ENCODE measurements at regions of chrX and their contacts with region 1.

Region 1: GRCh38 chrX:70433848-70434351 is 10.7 kb upstream of the DLG3 start:
- DNase-seq: peak; percentile 70 to 83
- ATAC-seq: peak; percentile 79 to 85 (median 80)
- H3K4me3 ChIP-seq: peak overlapping the region; percentile 76
- H3K27ac ChIP-seq: peak overlapping the region; percentile 89
- H3K4me1 ChIP-seq: peaks cover 4% of the 10 kb centered on the region
- H3K27me3 ChIP-seq: peaks cover 0 to 31% (median 0%) of the 10 kb centered on the region in 3 donors
- CTCF ChIP-seq: peak; percentile 66

Region 2: GRCh38 chrX:70133303-70134115 is 300.4 kb before region 1 on chrX and contains the start of gene IGBP1:
- intact Hi-C with region 1: loop called (anchors 2 to 10 kb)
- DNase-seq: peak; percentile 81 to 91
- ATAC-seq: peak; percentile 92 to 97 (median 94)
- H3K4me3 ChIP-seq: peak within 1 kb of the TSS; percentile 85
- H3K27ac ChIP-seq: peak within 1 kb of the TSS; percentile 77
- H3K4me1 ChIP-seq: peaks cover 10% of the 10 kb centered on the region
- H3K27me3 ChIP-seq: peaks cover 0 to 4% (median 0%) of the 10 kb centered on the region in 3 donors
- CTCF ChIP-seq: peak; percentile 46
- total RNA-seq, gene IGBP1: 45.0 to 60.6 (median 59.3) TPM

Region 3: DNA sequence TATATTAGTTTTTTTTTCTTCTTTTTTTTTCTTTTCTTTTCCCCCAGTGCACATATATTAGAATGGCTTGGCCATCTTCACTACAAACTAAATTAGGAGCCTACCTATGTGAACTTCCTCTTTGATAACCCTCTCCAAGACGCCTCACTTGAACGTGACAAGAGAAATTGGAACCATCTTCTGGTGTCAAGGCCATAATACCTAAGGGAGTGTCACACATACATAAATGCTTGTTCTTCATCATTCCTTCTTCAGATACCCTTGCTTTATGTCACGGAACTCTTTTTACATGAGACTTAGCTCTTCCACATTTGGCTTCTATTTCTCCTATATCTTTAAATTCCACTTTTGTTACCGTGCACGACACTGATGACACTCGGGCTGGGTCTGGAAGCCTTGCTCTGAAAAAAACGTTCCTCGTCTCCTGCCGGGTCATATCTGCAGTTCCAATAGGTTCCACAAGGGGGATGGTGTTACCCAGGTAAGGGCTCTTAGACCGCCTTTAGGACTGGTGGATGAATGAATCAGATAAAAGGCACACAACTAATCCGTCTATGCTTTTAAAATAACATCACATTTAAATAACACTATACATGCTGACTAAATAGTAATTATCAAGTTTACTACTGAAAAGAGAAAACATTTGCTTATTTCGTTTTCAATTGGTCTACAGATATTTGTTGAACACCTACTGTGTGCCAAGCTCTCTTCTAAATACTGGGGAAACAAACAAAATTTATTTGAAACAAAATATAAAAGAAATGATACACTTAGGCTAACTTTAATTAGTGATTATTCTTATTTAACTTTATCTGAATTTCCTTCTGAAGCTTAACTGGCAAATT is 236.7 kb before region 1 on chrX:
- intact Hi-C with region 1: loop called in 1 of 2 experiments (anchors 2 kb)
- DNase-seq: no peak
- ATAC-seq: peak in 2 of 4 donors; percentile 34 to 40
- H3K4me3 ChIP-seq: no peak overlapping the region
- H3K27ac ChIP-seq: no peak overlapping the region
- H3K4me1 ChIP-seq: no peaks in the 10 kb centered on the region
- H3K27me3 ChIP-seq: peaks cover 0 to 9% (median 0%) of the 10 kb centered on the region in 3 donors
- CTCF ChIP-seq: peak; percentile 61

Region 4: GRCh38 chrX:70289793-70290776 is 143.8 kb before region 1 on chrX and contains the starts of genes KIF4A and PDZD11:
- intact Hi-C with region 1: loop called (anchors 2 to 10 kb)
- DNase-seq: peak; percentile 82 to 90
- ATAC-seq: peak; percentile 99 to 100 (median 100)
- H3K4me3 ChIP-seq: peak within 1 kb of the TSS; percentile 70
- H3K27ac ChIP-seq: peak within 1 kb of the TSS; percentile 68
- H3K4me1 ChIP-seq: no peaks in the 10 kb centered on the region
- H3K27me3 ChIP-seq: peaks cover 0 to 17% (median 0%) of the 10 kb centered on the region in 3 donors
- CTCF ChIP-seq: no peak
- total RNA-seq, gene KIF4A: 0.07 to 0.15 (median 0.08) TPM in 3 of 4 donors, not detected in the other
- total RNA-seq, gene PDZD11: 18.5 to 26.2 (median 19.7) TPM

Region 5: GRCh38 chrX:70774223-70774622 is 340.3 kb after region 1 on chrX:
- intact Hi-C with region 1: no loop called
- DNase-seq: no peak
- ATAC-seq: no peak
- H3K4me3 ChIP-seq: no peak overlapping the region
- H3K27ac ChIP-seq: no peak overlapping the region
- H3K4me1 ChIP-seq: no peaks in the 10 kb centered on the region
- H3K27me3 ChIP-seq: no peaks in the 10 kb centered on the region
- CTCF ChIP-seq: no peak